ENCODE measurements at regions of chr6 and their contacts with region 1.

Region 1: GRCh38 chr6:25703005-25703404 is 51.0 kb downstream of the SCGN start:
- DNase-seq: no peak
- H3K4me3 ChIP-seq: no peak overlapping the region
- H3K27ac ChIP-seq: no peak overlapping the region
- H3K4me1 ChIP-seq: no peaks in the 10 kb centered on the region
- H3K27me3 ChIP-seq: peaks cover 0 to 2% (median 0%) of the 10 kb centered on the region in 5 experiments

Region 2: GRCh38 chr6:25717866-25718740 is 15.1 kb after region 1 on chr6:
- CTCF ChIA-PET with region 1: interaction called, 21 read pairs
- POLR2A ChIA-PET with region 1: no interaction called
- DNase-seq: peak; percentile 38 to 72 (median 66)
- H3K4me3 ChIP-seq: no peak overlapping the region
- H3K27ac ChIP-seq: no peak overlapping the region
- H3K4me1 ChIP-seq: peaks cover 3 to 12% (median 6%) of the 10 kb centered on the region in 4 experiments
- H3K27me3 ChIP-seq: no peaks in the 10 kb centered on the region

Region 3: DNA sequence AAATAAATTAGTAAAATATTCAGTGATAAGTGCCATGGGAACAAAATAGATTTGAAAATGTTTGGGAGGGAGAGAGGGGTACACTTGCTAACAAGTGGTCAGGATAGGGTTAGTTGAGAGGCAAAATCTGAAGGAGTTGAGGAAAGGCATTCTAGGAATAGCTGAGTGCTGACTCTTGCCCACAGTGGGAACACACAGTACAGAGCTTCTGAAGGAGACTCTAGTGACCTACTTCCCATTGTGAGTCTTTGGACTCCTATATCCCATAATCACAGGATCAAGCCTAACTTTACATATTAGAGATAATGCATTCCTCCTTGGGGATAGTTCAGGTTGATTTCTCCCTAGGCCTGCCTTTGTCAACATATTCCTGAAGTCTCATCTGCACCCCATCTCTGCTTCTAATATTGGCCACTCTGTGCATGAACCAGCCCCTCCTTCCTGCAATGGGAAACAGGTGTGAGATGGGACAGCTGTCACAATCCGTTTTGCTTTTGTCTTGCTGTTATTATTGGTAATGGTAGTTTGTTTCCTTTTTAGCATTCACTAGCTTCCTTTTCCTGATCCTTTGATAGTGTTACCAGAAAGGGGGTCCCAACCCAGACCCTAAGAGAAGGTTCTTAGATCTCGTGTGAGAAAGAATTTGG is 257.0 kb after region 1 on chr6:
- CTCF ChIA-PET with region 1: no interaction called
- POLR2A ChIA-PET with region 1: no interaction called
- DNase-seq: no peak
- H3K4me3 ChIP-seq: no peak overlapping the region
- H3K27ac ChIP-seq: no peak overlapping the region
- H3K4me1 ChIP-seq: peaks cover 24 to 40% (median 30%) of the 10 kb centered on the region in 4 experiments
- H3K27me3 ChIP-seq: no peaks in the 10 kb centered on the region

Measured in common myeloid progenitor, CD34-positive (primary cell).